Right cardiac atrium (tissue), 5 donors: ENCODE measurements at regions of chr6 and their contacts with region 1.

Region 1: DNA sequence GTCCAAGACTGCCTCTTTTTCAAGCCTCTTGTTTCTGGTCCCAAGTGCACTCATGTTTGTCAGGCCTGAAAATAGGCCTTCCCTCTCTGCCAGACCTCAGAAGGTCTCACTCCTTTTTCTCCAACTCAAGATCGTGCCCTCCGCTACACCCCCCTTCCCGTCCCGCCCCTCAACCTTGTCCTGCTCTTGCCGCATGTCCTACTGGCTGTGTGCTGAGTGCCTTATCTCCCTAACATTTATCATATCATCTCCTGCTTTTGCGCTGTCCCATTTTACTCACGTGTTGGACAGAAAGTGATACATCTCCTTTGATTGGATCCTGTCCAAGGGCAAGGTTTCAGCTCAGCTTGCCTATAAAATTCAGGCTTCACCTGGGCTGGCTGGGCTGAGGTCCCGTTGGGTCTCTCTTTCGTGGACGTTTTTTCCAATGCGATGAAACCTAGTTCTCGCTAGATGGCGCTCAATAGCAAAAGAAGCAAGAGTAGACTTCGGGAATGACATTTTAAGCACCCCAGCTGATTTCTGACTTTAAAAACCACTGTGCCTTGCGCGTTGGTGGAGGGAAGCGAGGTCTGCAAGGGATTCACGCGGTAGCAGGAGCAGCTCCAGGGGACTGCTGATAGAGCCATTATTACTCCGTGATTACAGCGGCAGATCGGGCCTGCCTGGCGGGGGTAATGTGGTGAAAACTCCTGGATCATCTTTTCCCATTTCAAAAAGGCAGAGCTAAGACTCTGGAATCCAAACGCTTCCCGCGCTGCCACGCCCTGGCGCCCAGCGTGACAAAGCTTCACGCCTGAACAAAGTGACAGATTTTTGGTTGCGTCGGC is 137.6 kb downstream of the IMPG1 start:
- DNase-seq: peak; percentile 19 to 66 (median 54)
- ATAC-seq: peak; percentile 66 to 75
- H3K4me3 ChIP-seq: peak overlapping the region; percentile 6
- H3K27ac ChIP-seq: no peak overlapping the region
- H3K4me1 ChIP-seq: no peaks in the 10 kb centered on the region
- H3K27me3 ChIP-seq: no peaks in the 10 kb centered on the region

Region 2: DNA sequence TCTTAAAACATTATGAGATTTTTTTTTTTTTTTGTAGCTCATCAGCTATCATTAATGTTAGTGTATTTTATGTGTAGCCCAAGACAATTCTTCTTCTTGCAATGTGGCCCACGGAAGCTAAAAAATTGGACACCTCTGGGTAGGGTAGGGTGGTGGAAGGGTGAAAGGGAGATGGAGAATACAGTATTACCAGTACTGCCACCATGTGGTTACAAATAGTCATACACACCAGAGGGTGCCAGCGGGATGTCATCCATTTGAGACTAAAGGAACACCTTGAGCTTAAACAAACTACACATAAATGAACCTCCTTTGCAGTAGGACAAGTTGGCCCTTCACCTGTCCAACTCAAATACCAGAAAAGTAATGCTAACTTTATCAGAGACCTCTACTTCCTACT is 926.5 kb after region 1 on chr6:
- intact Hi-C with region 1: loop called in 2 of 4 experiments (anchors 10 kb)
- DNase-seq: no peak
- ATAC-seq: no peak
- H3K4me3 ChIP-seq: no peak overlapping the region
- H3K27ac ChIP-seq: no peak overlapping the region
- H3K4me1 ChIP-seq: no peaks in the 10 kb centered on the region
- H3K27me3 ChIP-seq: no peaks in the 10 kb centered on the region

Region 3: GRCh38 chr6:77457720-77458349 is 1523.0 kb after region 1 on chr6:
- intact Hi-C with region 1: loop called in 3 of 4 experiments (anchors 5 to 10 kb)
- DNase-seq: peak; percentile 64 to 87 (median 70)
- ATAC-seq: peak; percentile 85 to 90
- H3K4me3 ChIP-seq: no peak overlapping the region
- H3K27ac ChIP-seq: no peak overlapping the region
- H3K4me1 ChIP-seq: no peaks in the 10 kb centered on the region
- H3K27me3 ChIP-seq: no peaks in the 10 kb centered on the region

Region 4: GRCh38 chr6:77466055-77466450 is 1531.2 kb after region 1 on chr6:
- intact Hi-C with region 1: loop called in 1 of 4 experiments (anchors 10 kb)
- DNase-seq: peak; percentile 45 to 66 (median 57)
- ATAC-seq: peak; percentile 72 to 84
- H3K4me3 ChIP-seq: peak overlapping the region; percentile 93
- H3K27ac ChIP-seq: no peak overlapping the region
- H3K4me1 ChIP-seq: peaks cover 2% of the 10 kb centered on the region
- H3K27me3 ChIP-seq: no peaks in the 10 kb centered on the region